AG04450 (cell line): ENCODE measurements at regions of chr1 and their contacts with region 1.

Region 1: DNA sequence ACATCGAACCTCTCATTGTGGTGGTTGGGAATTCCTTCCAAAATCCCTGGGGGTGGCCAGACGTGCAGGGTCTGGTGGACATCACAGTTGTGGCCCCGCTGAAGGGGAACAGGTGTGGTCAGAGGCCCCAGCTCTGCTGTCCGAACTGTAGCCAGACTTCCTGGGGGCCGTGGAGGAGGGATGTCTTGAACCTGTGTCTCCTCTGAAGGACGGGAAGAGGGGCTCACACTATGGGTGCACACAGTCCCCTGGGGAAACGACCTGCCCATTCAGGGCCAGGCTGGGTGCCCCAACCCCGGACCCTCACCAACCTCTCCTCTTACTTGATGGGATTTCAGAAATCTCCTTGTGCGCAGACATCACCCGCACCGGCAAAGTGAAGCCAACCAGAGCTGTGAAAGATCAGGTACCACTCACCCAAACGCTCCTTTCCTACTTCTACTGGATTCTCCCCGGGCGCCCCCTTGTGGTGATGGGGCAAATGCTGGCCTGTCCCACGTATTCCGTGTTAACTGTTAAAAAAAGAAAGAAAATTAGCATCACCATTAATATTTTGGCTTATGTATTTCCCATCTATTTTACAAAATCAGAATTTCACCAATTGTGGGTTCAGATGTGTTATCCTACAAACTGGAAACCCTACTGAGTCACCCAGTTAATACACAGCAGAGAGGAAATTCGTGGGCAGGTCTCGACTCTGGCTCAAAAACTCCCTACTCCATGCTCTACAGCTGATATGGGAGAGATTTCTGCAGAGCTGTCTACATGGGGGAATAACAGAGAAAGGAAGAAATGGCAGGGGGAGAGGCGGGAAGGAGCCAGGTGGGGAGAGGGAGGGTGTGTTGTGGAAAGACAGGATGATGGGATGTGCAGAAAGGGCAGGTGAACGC is 28.1 kb downstream of the PADI4 start:
- DNase-seq: peak; percentile 6
- H3K4me3 ChIP-seq: no peak overlapping the region
- H3K27ac ChIP-seq: no peak overlapping the region
- H3K27me3 ChIP-seq: peaks cover 23% of the 10 kb centered on the region
- CTCF ChIP-seq: peak; percentile 88

Region 2: GRCh38 chr1:17059739-17060460 is 276.2 kb before region 1 on chr1:
- CTCF ChIA-PET with region 1: interaction called, 10 read pairs
- POLR2A ChIA-PET with region 1: no interaction called
- DNase-seq: peak; percentile 26
- H3K4me3 ChIP-seq: no peak overlapping the region
- H3K27ac ChIP-seq: no peak overlapping the region
- H3K27me3 ChIP-seq: peaks cover 7% of the 10 kb centered on the region
- CTCF ChIP-seq: peak; percentile 84

Region 3: DNA sequence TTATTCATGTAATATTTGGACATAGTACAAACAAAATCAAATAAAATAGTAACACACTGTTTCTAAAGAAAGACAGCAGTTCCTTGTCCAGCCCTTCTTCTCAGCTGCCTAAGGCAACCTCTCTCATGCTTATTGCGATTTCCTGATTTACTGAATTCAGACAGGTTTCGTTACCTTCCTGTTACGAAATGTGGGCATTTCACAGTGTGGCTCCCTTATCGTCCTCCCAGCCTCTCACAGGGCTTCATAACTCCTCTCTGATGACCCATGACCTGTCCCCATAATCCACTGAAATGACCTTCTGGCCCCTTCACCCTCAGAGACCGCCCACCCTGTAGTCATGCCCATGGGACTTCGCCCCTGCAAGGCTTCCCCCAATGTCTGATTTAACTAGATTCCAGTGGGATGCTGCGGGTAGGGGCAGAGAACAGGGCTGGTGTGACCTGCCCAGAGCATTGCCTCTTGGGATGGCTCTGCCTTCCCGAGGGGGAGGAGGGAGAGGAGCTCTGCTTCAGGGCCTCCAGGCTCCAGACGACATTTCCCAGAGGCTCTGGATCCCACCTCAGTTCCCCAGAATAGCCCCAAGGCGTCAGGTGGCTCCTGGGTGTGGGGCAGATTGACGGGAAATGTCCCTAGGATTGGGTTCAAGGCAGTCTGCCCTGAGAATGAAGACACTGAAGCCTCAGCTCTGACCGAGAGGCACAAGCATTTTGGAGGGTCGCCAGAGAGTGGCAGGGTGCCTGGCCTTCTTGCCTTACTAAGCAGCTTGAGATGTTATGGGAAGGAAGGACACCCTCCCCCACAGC is 237.4 kb before region 1 on chr1:
- CTCF ChIA-PET with region 1: no interaction called
- POLR2A ChIA-PET with region 1: no interaction called
- DNase-seq: no peak
- H3K4me3 ChIP-seq: no peak overlapping the region
- H3K27ac ChIP-seq: no peak overlapping the region
- H3K27me3 ChIP-seq: peaks cover 33% of the 10 kb centered on the region
- CTCF ChIP-seq: no peak

Region 4: GRCh38 chr1:17119773-17120480 is 216.1 kb before region 1 on chr1:
- CTCF ChIA-PET with region 1: interaction called, 52 read pairs
- POLR2A ChIA-PET with region 1: no interaction called
- DNase-seq: no peak
- H3K4me3 ChIP-seq: no peak overlapping the region
- H3K27ac ChIP-seq: no peak overlapping the region
- H3K27me3 ChIP-seq: peaks cover 41% of the 10 kb centered on the region
- CTCF ChIP-seq: no peak